ENCODE measurements at regions of chr5 and their contacts with region 1.

Region 1: GRCh38 chr5:154520861-154521453 is 42.9 kb upstream of the HAND1 start:
- DNase-seq: no peak
- ATAC-seq: peak in 1 of 8 donors; percentile 24
- H3K4me3 ChIP-seq: no peak overlapping the region
- H3K27ac ChIP-seq: no peak overlapping the region
- H3K4me1 ChIP-seq: peaks cover 0 to 20% (median 4%) of the 10 kb centered on the region in 9 donors
- H3K27me3 ChIP-seq: peaks cover 0 to 48% (median 44%) of the 10 kb centered on the region in 7 donors
- CTCF ChIP-seq: peak; percentile 29 to 70 (median 60)

Region 2: GRCh38 chr5:154603978-154604679 is 83.2 kb after region 1 on chr5:
- intact Hi-C with region 1: loop called in 2 of 10 experiments (anchors 5 to 10 kb)
- DNase-seq: peak; percentile 21 to 39
- ATAC-seq: peak in 7 of 8 donors; percentile 47 to 84 (median 82)
- H3K4me3 ChIP-seq: peak overlapping the region in 7 of 10 donors; percentile 3 to 33 (median 20)
- H3K27ac ChIP-seq: no peak overlapping the region
- H3K4me1 ChIP-seq: peaks cover 0 to 8% (median 0%) of the 10 kb centered on the region in 9 donors
- H3K27me3 ChIP-seq: peaks cover 0 to 45% (median 40%) of the 10 kb centered on the region in 7 donors
- CTCF ChIP-seq: no peak

Region 3: DNA sequence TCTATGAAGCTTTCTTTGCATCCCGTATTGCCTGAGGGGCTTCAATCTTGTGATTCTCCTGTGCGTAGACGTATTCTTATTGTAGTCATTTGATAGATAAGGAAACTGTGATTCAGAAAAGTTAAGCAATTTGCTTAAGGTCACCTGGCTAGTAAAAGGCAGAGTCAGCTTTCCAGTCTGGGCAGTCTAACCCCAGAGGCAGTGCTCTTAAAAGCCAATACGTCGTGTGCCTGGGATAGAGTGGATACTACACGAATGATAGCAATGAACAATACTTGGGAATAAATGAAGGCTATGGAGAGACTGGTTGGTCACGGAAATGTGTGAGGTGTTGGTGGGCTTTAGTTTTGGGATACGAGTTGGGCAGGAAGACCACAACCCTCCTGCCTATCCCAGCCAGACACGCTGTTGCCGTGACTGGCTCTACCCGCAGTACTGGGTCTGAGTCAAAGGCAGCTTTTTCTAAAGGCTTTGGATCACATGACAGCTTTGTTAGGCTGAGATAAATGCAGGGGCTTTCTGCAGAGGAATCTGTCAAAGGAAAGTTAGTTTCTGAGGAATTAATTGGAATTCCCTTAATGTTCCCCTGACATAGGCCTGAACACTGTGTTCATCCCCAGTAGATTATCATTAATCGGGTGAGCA is 795.2 kb after region 1 on chr5:
- intact Hi-C with region 1: no loop called
- DNase-seq: no peak
- ATAC-seq: no peak
- H3K4me3 ChIP-seq: no peak overlapping the region
- H3K27ac ChIP-seq: no peak overlapping the region
- H3K4me1 ChIP-seq: no peaks in the 10 kb centered on the region
- H3K27me3 ChIP-seq: no peaks in the 10 kb centered on the region
- CTCF ChIP-seq: no peak